ENCODE measurements at regions of chr10 and their contacts with region 1.

Region 1: GRCh38 chr10:11782793-11783557 is 40.2 kb upstream of the PROSER2 start:
- DNase-seq: peak in 1 of 2 experiments; percentile 48
- H3K4me3 ChIP-seq: no peak overlapping the region
- H3K27ac ChIP-seq: no peak overlapping the region
- H3K4me1 ChIP-seq: no peaks in the 10 kb centered on the region
- H3K27me3 ChIP-seq: no peaks in the 10 kb centered on the region
- CTCF ChIP-seq: peak in 2 of 3 experiments; percentile 41 to 54; a peak in 2 of 4 replicates
- EP300 ChIP-seq: no peak
- POLR2A ChIP-seq: no peak
- RAD21 ChIP-seq: peak; percentile 60 to 62

Region 2: DNA sequence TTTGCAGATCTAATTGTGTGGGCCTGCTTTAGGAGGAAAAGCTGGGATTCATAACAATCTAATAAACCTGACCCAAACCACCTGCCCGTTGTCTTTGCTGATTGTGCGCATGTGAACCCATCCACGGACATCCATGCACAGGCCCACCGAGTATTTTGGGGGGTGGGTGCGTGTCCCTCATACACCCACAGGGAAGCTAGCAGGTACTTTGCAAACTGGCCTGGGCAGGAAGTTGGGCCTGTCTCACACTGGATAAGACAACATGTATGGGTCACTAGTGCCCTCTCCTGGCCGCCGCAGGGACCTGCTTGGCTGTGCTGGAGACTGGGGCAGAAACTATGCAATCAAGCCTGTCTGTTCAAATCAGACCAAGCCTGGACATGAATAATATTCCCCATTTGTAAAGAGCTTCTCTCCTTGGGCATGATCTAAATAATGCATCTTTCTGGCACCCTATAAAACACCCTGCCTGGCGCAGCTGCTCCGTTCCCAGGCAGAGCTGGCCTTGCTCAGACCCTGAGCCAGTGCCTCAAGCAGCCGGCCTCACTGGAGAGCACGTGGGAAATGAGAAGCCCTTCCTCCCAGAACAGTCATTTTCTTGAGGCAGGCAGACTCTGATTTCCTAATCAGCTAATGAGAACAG is 25.0 kb before region 1 on chr10:
- CTCF ChIA-PET with region 1: interaction called, 14 read pairs
- POLR2A ChIA-PET with region 1: no interaction called
- DNase-seq: peak; percentile 62 to 92
- H3K4me3 ChIP-seq: no peak overlapping the region
- H3K27ac ChIP-seq: no peak overlapping the region
- H3K4me1 ChIP-seq: no peaks in the 10 kb centered on the region; a peak in 1 of 7 replicates
- H3K27me3 ChIP-seq: no peaks in the 10 kb centered on the region
- CTCF ChIP-seq: peak; percentile 92 to 98 (median 93)
- EP300 ChIP-seq: no peak
- POLR2A ChIP-seq: no peak
- RAD21 ChIP-seq: peak; percentile 97 to 98

Region 3: DNA sequence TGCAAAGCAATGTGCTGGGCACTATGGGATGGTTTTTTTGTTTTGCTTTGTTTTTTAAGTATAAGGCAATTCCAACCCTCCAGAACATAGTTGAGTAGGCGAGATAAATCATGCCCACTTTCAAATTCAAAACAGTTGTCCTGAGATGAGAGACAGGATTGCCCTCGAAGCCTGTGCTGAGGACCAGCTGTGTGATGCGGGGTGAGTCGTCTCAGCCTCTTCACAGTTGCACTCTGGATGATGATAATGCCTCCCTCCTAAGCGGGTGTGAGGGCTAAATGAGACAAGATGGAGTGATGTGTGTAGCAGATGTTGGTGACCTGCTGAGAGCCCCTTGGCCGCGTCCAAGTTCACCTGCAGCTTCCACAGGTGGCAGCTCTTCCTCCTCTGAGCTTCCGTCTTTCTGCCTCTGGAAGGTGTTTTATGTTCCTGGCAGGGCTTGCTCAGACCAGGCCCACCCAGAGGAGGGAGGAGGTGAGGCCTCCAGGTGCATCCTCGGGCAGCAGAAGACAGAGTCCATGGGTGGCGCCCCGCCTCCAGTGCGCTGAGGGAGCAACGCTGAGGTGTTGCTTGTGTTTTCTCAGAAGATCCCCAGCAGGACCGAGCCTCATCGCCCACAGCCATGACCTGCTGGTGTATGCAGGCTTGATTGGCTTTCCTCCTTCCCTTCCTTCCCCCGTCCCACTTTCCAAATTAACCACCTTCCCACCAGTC is 10.2 kb before region 1 on chr10:
- CTCF ChIA-PET with region 1: interaction called, 13 read pairs
- POLR2A ChIA-PET with region 1: interaction called, 3 read pairs
- DNase-seq: no peak
- H3K4me3 ChIP-seq: no peak overlapping the region
- H3K27ac ChIP-seq: no peak overlapping the region
- H3K4me1 ChIP-seq: no peaks in the 10 kb centered on the region; a peak in 1 of 7 replicates
- H3K27me3 ChIP-seq: no peaks in the 10 kb centered on the region
- CTCF ChIP-seq: no peak
- EP300 ChIP-seq: no peak
- POLR2A ChIP-seq: no peak
- RAD21 ChIP-seq: no peak

Region 4: GRCh38 chr10:11793762-11794479 is 10.9 kb after region 1 on chr10:
- CTCF ChIA-PET with region 1: interaction called, 40 read pairs
- POLR2A ChIA-PET with region 1: no interaction called
- DNase-seq: no peak
- H3K4me3 ChIP-seq: no peak overlapping the region
- H3K27ac ChIP-seq: no peak overlapping the region
- H3K4me1 ChIP-seq: peaks cover 0 to 3% (median 0%) of the 10 kb centered on the region in 4 experiments; a peak in 1 of 7 replicates
- H3K27me3 ChIP-seq: no peaks in the 10 kb centered on the region
- CTCF ChIP-seq: no peak
- EP300 ChIP-seq: no peak
- POLR2A ChIP-seq: no peak
- RAD21 ChIP-seq: no peak

Region 5: GRCh38 chr10:11810313-11810766 is 27.4 kb after region 1 on chr10:
- CTCF ChIA-PET with region 1: interaction called, 20 read pairs
- POLR2A ChIA-PET with region 1: no interaction called
- DNase-seq: no peak
- H3K4me3 ChIP-seq: no peak overlapping the region
- H3K27ac ChIP-seq: no peak overlapping the region
- H3K4me1 ChIP-seq: peaks cover 0 to 7% (median under 1%) of the 10 kb centered on the region in 4 experiments; a peak in 2 of 7 replicates
- H3K27me3 ChIP-seq: no peaks in the 10 kb centered on the region
- CTCF ChIP-seq: no peak
- EP300 ChIP-seq: no peak
- POLR2A ChIP-seq: no peak
- RAD21 ChIP-seq: no peak

Region 6: DNA sequence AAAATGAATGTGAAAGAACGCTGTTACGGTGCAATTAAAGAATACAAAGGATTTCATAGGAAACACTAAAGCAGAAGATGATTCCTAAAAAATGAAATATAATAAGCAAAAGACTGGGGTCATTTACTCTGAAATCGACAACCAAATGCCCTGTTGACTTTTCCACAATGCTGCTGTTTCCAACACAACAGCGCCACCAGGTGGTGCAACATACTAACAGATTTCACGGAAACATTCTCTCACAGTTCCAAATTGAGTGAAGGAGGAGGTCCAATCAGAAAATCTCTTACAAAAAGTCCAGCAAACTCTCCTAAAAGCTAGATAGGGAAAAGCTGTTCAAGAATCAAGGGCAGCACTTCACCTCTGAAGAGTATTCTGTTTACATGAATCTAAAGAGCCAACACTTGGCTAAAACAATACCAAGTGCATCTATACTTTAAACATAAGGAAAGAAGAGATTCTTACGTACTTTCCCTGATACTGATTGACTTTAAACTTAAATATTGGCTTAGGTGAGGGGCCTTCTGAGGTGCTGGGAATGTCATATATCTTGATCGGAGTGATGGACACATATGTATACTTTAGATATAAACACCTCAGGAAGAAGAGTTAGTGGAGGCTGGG is 203.7 kb after region 1 on chr10:
- CTCF ChIA-PET with region 1: interaction called, 10 read pairs
- POLR2A ChIA-PET with region 1: no interaction called
- DNase-seq: peak; percentile 27 to 84
- H3K4me3 ChIP-seq: no peak overlapping the region
- H3K27ac ChIP-seq: no peak overlapping the region
- H3K4me1 ChIP-seq: no peaks in the 10 kb centered on the region
- H3K27me3 ChIP-seq: no peaks in the 10 kb centered on the region
- CTCF ChIP-seq: peak; percentile 37 to 90 (median 82)
- EP300 ChIP-seq: no peak
- POLR2A ChIP-seq: no peak
- RAD21 ChIP-seq: peak; percentile 96